Panc1 (cell line): ENCODE measurements at regions of chrX and their contacts with region 1.

Region 1: DNA sequence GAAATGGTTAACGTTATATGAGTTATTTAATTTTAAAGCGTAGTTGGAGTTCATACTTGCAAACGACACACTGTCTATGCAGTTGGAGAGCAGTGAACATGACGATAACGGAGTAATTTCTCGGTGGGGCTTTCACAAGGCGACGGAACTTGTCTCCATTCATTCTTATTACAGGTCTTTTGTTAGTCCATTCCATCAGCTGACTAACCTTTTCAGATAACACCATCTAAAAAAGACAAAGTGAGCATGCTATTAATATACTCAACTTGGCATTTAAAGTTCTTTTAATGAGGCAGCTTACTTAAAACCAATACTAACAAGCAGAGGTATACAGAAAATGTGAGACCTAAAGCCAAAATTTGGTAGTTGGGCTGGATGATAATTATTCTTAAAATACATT is 19.9 kb downstream of the MAGT1 start:
- DNase-seq: no peak
- ATAC-seq: no peak
- H3K4me3 ChIP-seq: no peak overlapping the region
- H3K27ac ChIP-seq: no peak overlapping the region
- H3K4me1 ChIP-seq: no peaks in the 10 kb centered on the region
- H3K27me3 ChIP-seq: no peaks in the 10 kb centered on the region
- CTCF ChIP-seq: no peak

Region 2: DNA sequence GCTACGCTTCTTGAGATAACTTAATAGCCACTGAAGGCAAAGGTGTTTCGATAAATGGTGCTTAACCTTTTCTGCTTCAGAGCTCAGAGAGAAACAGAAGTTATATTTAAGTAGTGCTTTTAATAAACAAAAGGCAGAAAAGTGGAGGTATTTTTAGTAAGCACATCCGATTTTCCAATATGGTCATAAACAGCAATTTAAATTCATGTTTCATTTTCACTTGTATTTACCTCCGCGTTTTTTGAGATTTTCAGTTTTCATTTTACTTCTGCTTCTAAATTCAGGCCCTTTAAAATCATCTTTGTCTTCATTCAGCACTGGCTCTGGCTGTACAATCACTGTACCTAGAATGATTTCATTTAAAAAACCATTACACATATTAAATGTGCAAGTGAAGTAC is 181.8 kb before region 1 on chrX:
- CTCF ChIA-PET with region 1: no interaction called
- POLR2A ChIA-PET with region 1: interaction called, 17 read pairs
- in situ Hi-C with region 1: no loop called
- intact Hi-C with region 1: no loop called
- DNase-seq: no peak
- ATAC-seq: no peak
- H3K4me3 ChIP-seq: no peak overlapping the region
- H3K27ac ChIP-seq: no peak overlapping the region
- H3K4me1 ChIP-seq: no peaks in the 10 kb centered on the region
- H3K27me3 ChIP-seq: no peaks in the 10 kb centered on the region
- CTCF ChIP-seq: no peak

Region 3: GRCh38 chrX:78048052-78048451 is 172.7 kb after region 1 on chrX:
- CTCF ChIA-PET with region 1: no interaction called
- POLR2A ChIA-PET with region 1: no interaction called
- in situ Hi-C with region 1: no loop called
- intact Hi-C with region 1: no loop called
- DNase-seq: no peak
- ATAC-seq: no peak
- H3K4me3 ChIP-seq: no peak overlapping the region
- H3K27ac ChIP-seq: no peak overlapping the region
- H3K4me1 ChIP-seq: no peaks in the 10 kb centered on the region
- H3K27me3 ChIP-seq: no peaks in the 10 kb centered on the region
- CTCF ChIP-seq: no peak